ENCODE measurements at regions of chr10 and their contacts with region 1.

Region 1: DNA sequence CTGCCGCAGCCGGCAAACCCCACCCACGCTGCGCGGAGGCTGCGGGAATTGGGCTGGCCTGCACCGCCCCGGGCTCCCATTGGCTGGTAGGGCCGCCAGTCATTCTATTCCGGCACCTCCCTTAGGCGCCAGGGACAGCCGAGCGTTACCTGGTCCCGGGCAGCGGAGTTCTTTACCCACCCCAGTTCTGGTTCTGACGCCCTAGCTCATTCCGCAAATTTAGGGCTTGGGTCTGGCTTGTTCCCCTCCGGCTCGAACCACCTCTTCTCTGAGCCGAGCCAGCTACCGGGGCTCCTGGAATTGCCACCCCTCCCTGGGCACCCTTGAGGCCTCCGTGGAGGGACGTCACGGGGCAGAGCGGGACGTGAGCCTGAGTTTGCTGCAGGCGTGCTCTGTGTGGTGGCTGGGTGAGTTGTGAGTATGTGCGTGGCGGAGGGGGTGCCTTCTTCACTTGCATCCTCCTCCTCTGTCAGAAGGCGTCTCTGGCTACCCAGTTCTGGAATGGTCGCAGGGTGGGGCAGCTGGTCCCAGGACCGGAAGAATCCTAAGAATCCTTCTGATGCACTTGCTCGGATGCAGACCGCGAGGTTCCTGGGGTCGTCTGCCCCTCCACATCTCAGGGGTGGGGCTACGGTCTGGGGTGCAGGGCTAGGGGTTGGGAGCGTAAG is at the starts of genes PDZD7 and SFXN3:
- DNase-seq: peak; percentile 99
- H3K27ac ChIP-seq: peak within 1 kb of the TSS; percentile 99
- CTCF ChIP-seq: no peak

Region 2: GRCh38 chr10:101042667-101043355 is 11.5 kb after region 1 on chr10:
- CTCF ChIA-PET with region 1: interaction called, 12 read pairs
- POLR2A ChIA-PET with region 1: interaction called, 5 read pairs
- DNase-seq: peak; percentile 99
- H3K27ac ChIP-seq: peak overlapping the region; percentile 96
- CTCF ChIP-seq: no peak